CD4-positive, alpha-beta memory T cell (primary cell): ENCODE measurements at regions of chr11 and their contacts with region 1.

Region 1: GRCh38 chr11:10933455-10934292 is 75.8 kb upstream of the ZBED5 start:
- DNase-seq: peak; percentile 70 to 80 (median 74)
- H3K4me3 ChIP-seq: peak overlapping the region; percentile 21 to 33
- H3K4me3 Mint-ChIP-seq: peak overlapping the region; percentile 85 to 94 (median 90)
- H3K27ac ChIP-seq: no peak overlapping the region
- H3K27ac Mint-ChIP-seq: peak overlapping the region in 5 of 7 donors; percentile 11 to 86 (median 57)
- H3K4me1 ChIP-seq: peaks cover 20% of the 10 kb centered on the region
- H3K4me1 Mint-ChIP-seq: peaks cover 5 to 21% (median 12%) of the 10 kb centered on the region in 4 donors
- H3K27me3 ChIP-seq: peaks cover 23% of the 10 kb centered on the region
- H3K27me3 Mint-ChIP-seq: peaks cover 11 to 26% of the 10 kb centered on the region in 2 donors

Region 2: GRCh38 chr11:9990221-9990975 is 943.3 kb before region 1 on chr11:
- CTCF ChIA-PET with region 1: no interaction called
- POLR2A ChIA-PET with region 1: no interaction called
- intact Hi-C with region 1: no loop called
- DNase-seq: no peak
- H3K4me3 ChIP-seq: no peak overlapping the region
- H3K4me3 Mint-ChIP-seq: no peak overlapping the region
- H3K27ac ChIP-seq: no peak overlapping the region
- H3K27ac Mint-ChIP-seq: peak overlapping the region in 1 of 7 donors; percentile 26
- H3K4me1 ChIP-seq: no peaks in the 10 kb centered on the region
- H3K4me1 Mint-ChIP-seq: no peaks in the 10 kb centered on the region
- H3K27me3 ChIP-seq: no peaks in the 10 kb centered on the region
- H3K27me3 Mint-ChIP-seq: no peaks in the 10 kb centered on the region

Region 3: GRCh38 chr11:10792398-10792975 is 141.2 kb before region 1 on chr11:
- CTCF ChIA-PET with region 1: interaction called, 18 read pairs
- POLR2A ChIA-PET with region 1: interaction called, 4 read pairs
- intact Hi-C with region 1: loop called (anchors 1 kb)
- DNase-seq: peak; percentile 71 to 81 (median 72)
- H3K4me3 ChIP-seq: no peak overlapping the region
- H3K4me3 Mint-ChIP-seq: peak overlapping the region in 3 of 8 donors; percentile 0 to 65 (median 58)
- H3K27ac ChIP-seq: no peak overlapping the region
- H3K27ac Mint-ChIP-seq: peak overlapping the region in 1 of 7 donors; percentile 21
- H3K4me1 ChIP-seq: peaks cover 28% of the 10 kb centered on the region
- H3K4me1 Mint-ChIP-seq: peaks cover 21 to 47% (median 33%) of the 10 kb centered on the region in 4 donors
- H3K27me3 ChIP-seq: no peaks in the 10 kb centered on the region
- H3K27me3 Mint-ChIP-seq: peaks cover 1 to 2% of the 10 kb centered on the region in 2 donors

Region 4: GRCh38 chr11:10893714-10894151 is 39.9 kb before region 1 on chr11:
- CTCF ChIA-PET with region 1: no interaction called
- POLR2A ChIA-PET with region 1: no interaction called
- intact Hi-C with region 1: no loop called
- DNase-seq: no peak
- H3K4me3 ChIP-seq: no peak overlapping the region
- H3K4me3 Mint-ChIP-seq: no peak overlapping the region
- H3K27ac ChIP-seq: no peak overlapping the region
- H3K27ac Mint-ChIP-seq: no peak overlapping the region
- H3K4me1 ChIP-seq: no peaks in the 10 kb centered on the region
- H3K4me1 Mint-ChIP-seq: no peaks in the 10 kb centered on the region
- H3K27me3 ChIP-seq: no peaks in the 10 kb centered on the region
- H3K27me3 Mint-ChIP-seq: peaks cover 3 to 7% of the 10 kb centered on the region in 2 donors

Region 5: GRCh38 chr11:10943968-10944367 is 10.3 kb after region 1 on chr11:
- CTCF ChIA-PET with region 1: interaction called, 22 read pairs
- POLR2A ChIA-PET with region 1: no interaction called
- intact Hi-C with region 1: no loop called
- DNase-seq: no peak
- H3K4me3 ChIP-seq: no peak overlapping the region
- H3K4me3 Mint-ChIP-seq: no peak overlapping the region
- H3K27ac ChIP-seq: no peak overlapping the region
- H3K27ac Mint-ChIP-seq: no peak overlapping the region
- H3K4me1 ChIP-seq: no peaks in the 10 kb centered on the region
- H3K4me1 Mint-ChIP-seq: no peaks in the 10 kb centered on the region
- H3K27me3 ChIP-seq: no peaks in the 10 kb centered on the region
- H3K27me3 Mint-ChIP-seq: peaks cover 6% of the 10 kb centered on the region in 2 donors

Region 6: GRCh38 chr11:11022125-11022730 is 88.6 kb after region 1 on chr11:
- CTCF ChIA-PET with region 1: interaction called, 123 read pairs
- POLR2A ChIA-PET with region 1: interaction called, 4 read pairs
- intact Hi-C with region 1: loop called (anchors 1 kb)
- DNase-seq: peak in 2 of 5 donors; percentile 7 to 17
- H3K4me3 ChIP-seq: no peak overlapping the region
- H3K4me3 Mint-ChIP-seq: no peak overlapping the region
- H3K27ac ChIP-seq: no peak overlapping the region
- H3K27ac Mint-ChIP-seq: no peak overlapping the region
- H3K4me1 ChIP-seq: no peaks in the 10 kb centered on the region
- H3K4me1 Mint-ChIP-seq: no peaks in the 10 kb centered on the region
- H3K27me3 ChIP-seq: no peaks in the 10 kb centered on the region
- H3K27me3 Mint-ChIP-seq: peaks cover 0 to 6% of the 10 kb centered on the region in 2 donors

Region 7: DNA sequence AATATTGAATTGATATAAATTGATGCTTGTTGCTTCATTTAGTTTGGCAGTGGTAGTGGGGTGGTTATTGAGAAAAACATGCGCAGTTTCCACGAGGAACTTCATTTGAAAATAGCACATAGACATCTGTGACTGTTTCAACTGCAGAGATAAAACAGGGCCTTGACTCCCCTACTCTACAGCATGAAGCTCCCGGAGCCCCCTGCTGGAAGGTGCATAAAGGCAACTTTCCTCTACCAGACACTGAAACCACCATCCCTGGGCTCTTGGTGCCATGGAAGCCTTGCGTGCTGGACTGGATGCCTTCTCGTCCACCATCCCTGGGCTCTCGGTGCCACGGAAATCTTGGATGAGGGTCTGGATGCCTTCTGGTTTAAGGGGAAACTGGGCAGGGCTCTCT is 223.5 kb after region 1 on chr11:
- CTCF ChIA-PET with region 1: interaction called, 6 read pairs
- POLR2A ChIA-PET with region 1: interaction called, 3 read pairs
- intact Hi-C with region 1: loop called (anchors 1 kb)
- DNase-seq: peak; percentile 46 to 66 (median 60)
- H3K4me3 ChIP-seq: no peak overlapping the region
- H3K4me3 Mint-ChIP-seq: peak overlapping the region in 4 of 8 donors; percentile 51 to 88 (median 86)
- H3K27ac ChIP-seq: no peak overlapping the region
- H3K27ac Mint-ChIP-seq: peak overlapping the region in 5 of 7 donors; percentile 87 to 94 (median 89)
- H3K4me1 ChIP-seq: peaks cover 35% of the 10 kb centered on the region
- H3K4me1 Mint-ChIP-seq: peaks cover 21 to 49% (median 30%) of the 10 kb centered on the region in 4 donors
- H3K27me3 ChIP-seq: no peaks in the 10 kb centered on the region
- H3K27me3 Mint-ChIP-seq: no peaks in the 10 kb centered on the region

Region 8: DNA sequence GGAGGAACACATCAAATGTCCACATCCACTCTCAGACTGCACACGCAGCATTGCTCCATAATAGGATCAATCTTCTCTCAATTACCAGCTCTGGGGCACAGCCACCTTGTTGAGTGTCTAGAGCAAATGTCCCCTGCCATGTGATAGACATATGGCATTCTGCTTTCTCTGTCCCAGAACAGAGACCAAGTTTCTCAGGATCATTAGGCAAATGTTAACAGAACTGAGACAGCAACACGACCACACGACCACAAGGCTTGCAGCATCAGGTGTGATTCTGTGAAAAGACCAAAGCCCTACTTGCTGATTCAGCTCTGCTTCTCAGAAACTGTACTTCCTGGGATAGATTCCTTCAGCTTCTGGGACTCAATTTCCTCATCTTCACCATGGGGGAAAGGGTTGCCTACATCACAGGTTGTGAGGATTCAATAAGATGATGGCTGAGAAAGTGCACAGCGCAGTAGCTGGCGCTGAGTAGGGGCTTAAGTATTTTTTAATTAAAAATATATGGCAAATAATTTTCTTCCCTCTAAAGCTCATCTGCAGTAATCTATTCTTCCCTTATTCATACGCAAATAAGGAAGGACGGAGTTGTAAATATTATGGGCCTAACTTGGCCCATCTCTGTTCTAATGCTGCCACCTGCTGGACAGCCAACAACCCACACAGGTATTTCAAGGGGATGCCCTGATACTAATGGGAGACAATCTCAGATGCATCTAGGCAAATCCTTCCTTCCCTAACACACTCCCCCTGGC is 853.8 kb after region 1 on chr11:
- CTCF ChIA-PET with region 1: interaction called, 17 read pairs
- POLR2A ChIA-PET with region 1: no interaction called
- intact Hi-C with region 1: loop called (anchors 1 kb)
- DNase-seq: peak; percentile 59 to 67 (median 61)
- H3K4me3 ChIP-seq: no peak overlapping the region
- H3K4me3 Mint-ChIP-seq: no peak overlapping the region
- H3K27ac ChIP-seq: no peak overlapping the region
- H3K27ac Mint-ChIP-seq: no peak overlapping the region
- H3K4me1 ChIP-seq: no peaks in the 10 kb centered on the region
- H3K4me1 Mint-ChIP-seq: peaks cover 0 to 1% (median 0%) of the 10 kb centered on the region in 4 donors
- H3K27me3 ChIP-seq: no peaks in the 10 kb centered on the region
- H3K27me3 Mint-ChIP-seq: peaks cover 0 to 7% of the 10 kb centered on the region in 2 donors